Activated naive CD4-positive, alpha-beta T cell treated with anti-CD3 and anti-CD28 coated beads for 36 hours (primary cell): ENCODE measurements at regions of chr21 and their contacts with region 1.

Region 1: DNA sequence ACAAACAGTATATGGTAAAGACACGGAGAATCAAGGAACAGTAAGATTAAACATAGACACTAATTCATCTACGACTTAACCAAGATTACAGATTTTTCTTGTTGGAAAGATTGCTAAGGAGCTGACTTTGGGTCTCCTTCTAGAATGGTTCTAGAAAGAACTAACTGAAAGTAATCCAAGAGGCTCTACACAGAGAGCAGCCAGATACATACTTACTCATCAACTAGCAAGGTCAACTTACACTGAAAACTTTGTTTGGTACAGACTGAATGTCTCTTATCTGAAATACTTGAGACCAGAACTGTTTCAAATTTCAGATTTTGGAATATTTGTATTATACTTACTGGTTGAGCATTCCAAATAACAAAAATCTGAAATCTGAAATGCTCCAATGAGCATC is 5.8 kb downstream of the C21orf91 start:
- DNase-seq: no peak
- H3K4me3 Mint-ChIP-seq: no peak overlapping the region
- H3K27ac Mint-ChIP-seq: peak overlapping the region; percentile 65
- H3K4me1 Mint-ChIP-seq: peaks cover 60% of the 10 kb centered on the region
- H3K27me3 Mint-ChIP-seq: no peaks in the 10 kb centered on the region

Region 2: GRCh38 chr21:17802572-17802971 is 10.8 kb before region 1 on chr21:
- CTCF ChIA-PET with region 1: interaction called, 5 read pairs
- intact Hi-C with region 1: loop called (anchors 1 kb)
- DNase-seq: no peak
- H3K4me3 Mint-ChIP-seq: no peak overlapping the region
- H3K27ac Mint-ChIP-seq: no peak overlapping the region
- H3K4me1 Mint-ChIP-seq: peaks cover 56% of the 10 kb centered on the region
- H3K27me3 Mint-ChIP-seq: no peaks in the 10 kb centered on the region

Region 3: DNA sequence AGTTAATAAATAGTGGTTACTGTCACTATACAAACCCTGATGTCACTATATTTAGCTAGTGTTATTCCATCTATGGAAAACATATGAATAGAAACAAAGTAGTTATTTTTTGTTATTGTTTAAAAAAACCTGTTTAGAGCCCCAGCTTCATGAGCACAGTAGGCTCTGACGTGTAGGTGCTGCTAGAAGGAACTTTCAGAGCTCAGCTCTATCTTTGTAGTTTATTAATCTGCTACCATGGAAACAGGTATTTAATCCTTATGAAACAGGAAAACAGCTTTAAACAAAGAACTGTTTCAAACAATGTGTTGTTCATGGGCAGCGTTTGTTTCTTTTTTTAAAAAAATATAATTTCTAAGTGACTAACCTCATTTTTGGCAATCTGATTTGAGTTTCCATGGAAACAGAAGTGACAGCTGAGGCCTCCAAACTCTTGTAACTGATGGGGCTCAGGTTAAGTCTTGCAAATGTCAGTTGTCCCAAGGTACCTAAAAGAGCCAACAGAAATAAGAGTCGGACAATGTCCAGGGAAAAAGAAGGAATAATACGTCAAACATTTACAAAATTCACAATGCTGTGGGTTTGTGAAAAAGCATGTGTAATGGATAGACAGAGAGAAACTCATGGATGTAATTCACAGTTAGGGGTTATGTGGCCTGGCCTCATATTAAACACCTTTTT is 167.8 kb after region 1 on chr21:
- CTCF ChIA-PET with region 1: no interaction called
- intact Hi-C with region 1: no loop called
- DNase-seq: no peak
- H3K4me3 Mint-ChIP-seq: no peak overlapping the region
- H3K27ac Mint-ChIP-seq: no peak overlapping the region
- H3K4me1 Mint-ChIP-seq: no peaks in the 10 kb centered on the region
- H3K27me3 Mint-ChIP-seq: no peaks in the 10 kb centered on the region